ENCODE measurements at regions of chr1 and their contacts with region 1.

Region 1: DNA sequence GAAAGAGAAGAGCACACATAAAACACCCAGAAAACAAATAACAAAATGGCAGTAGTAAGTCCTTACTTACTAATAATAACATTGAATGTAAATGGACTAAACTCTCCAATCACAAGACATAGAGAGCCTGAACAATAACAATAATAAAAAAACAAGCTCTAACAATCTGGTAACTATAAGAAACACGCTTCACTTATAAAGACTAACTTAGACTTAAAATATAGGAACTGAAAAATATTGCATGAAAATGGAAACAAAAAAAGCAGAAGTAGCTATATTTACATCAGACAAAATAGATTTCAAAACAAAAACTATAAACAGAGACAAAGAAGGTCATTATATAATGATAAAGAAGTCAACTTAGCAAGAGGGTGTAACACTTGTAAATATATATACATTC is 83.1 kb upstream of the LYPLAL1 start:
- DNase-seq: no peak
- ATAC-seq: peak; percentile 80
- H3K4me3 Mint-ChIP-seq: peak overlapping the region; percentile 70
- H3K27ac Mint-ChIP-seq: peak overlapping the region; percentile 85
- H3K4me1 Mint-ChIP-seq: peaks cover 47% of the 10 kb centered on the region
- H3K27me3 Mint-ChIP-seq: no peaks in the 10 kb centered on the region
- CTCF ChIP-seq: no peak

Region 2: DNA sequence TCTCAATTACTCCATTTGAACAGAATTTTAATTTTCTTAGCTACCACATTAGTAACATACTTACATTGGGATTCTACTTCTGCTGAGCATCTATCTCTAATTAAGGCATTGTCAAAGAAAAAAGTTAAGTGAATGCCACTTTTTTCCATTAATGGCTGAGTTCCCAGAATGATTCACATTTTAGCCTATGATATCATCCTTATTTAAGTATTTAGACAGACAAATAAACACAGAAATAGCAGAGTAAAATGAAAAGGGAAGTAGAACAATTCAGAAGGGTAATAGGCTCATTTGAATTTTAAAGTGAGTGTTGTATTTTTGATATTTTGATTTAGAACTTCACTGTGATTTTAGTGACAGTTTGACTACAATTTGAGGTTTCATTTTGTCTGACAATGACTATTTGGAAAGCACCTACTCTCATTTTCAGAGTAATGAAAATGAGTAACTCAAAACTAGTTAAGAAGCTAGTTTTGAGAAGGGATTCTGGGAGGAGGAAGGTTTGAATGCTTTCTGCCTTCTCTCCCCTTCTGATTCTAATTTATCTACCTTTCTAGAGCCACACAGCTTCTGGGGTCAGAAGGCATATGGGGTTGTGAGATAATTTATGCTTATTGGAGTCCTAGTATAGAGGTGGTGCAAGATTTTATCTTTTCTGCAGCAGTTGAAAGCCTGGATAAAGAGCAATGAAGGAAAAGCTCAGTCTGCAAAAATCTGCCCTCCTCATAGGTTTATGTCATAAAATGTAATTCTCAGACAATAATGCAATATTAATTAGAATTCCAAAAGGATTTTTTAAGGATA is 98.6 kb after region 1 on chr1:
- CTCF ChIA-PET with region 1: no interaction called
- POLR2A ChIA-PET with region 1: interaction called, 3 read pairs
- intact Hi-C with region 1: loop called (anchors 1 kb)
- DNase-seq: no peak
- ATAC-seq: peak; percentile 61
- H3K4me3 Mint-ChIP-seq: peak overlapping the region; percentile 74
- H3K27ac Mint-ChIP-seq: peak overlapping the region; percentile 91
- H3K4me1 Mint-ChIP-seq: peaks cover 61% of the 10 kb centered on the region
- H3K27me3 Mint-ChIP-seq: no peaks in the 10 kb centered on the region
- CTCF ChIP-seq: no peak